GM12878 (cell line): ENCODE measurements at regions of chrX and their contacts with region 1.

Region 1: GRCh38 chrX:155279873-155280272 is 15.6 kb upstream of the RAB39B start:
- DNase-seq: no peak
- ATAC-seq: no peak
- H3K4me3 ChIP-seq: no peak overlapping the region
- H3K27ac ChIP-seq: no peak overlapping the region
- H3K4me1 ChIP-seq: no peaks in the 10 kb centered on the region
- H3K27me3 ChIP-seq: no peaks in the 10 kb centered on the region
- CTCF ChIP-seq: no peak
- EP300 ChIP-seq: no peak
- POLR2A ChIP-seq: no peak
- RAD21 ChIP-seq: no peak

Region 2: GRCh38 chrX:155330992-155331391 is 51.1 kb after region 1 on chrX:
- CTCF ChIA-PET with region 1: no interaction called
- POLR2A ChIA-PET with region 1: no interaction called
- RAD21 ChIA-PET with region 1: no interaction called
- SMC1A ChIA-PET with region 1: no interaction called
- in situ Hi-C with region 1: no loop called
- intact Hi-C with region 1: no loop called
- DNase-seq: no peak
- ATAC-seq: no peak
- H3K4me3 ChIP-seq: no peak overlapping the region
- H3K27ac ChIP-seq: no peak overlapping the region
- H3K4me1 ChIP-seq: no peaks in the 10 kb centered on the region
- H3K27me3 ChIP-seq: no peaks in the 10 kb centered on the region
- CTCF ChIP-seq: no peak
- EP300 ChIP-seq: no peak
- POLR2A ChIP-seq: no peak
- RAD21 ChIP-seq: no peak

Region 3: GRCh38 chrX:155534797-155535196 is 254.9 kb after region 1 on chrX:
- CTCF ChIA-PET with region 1: no interaction called
- POLR2A ChIA-PET with region 1: no interaction called
- RAD21 ChIA-PET with region 1: no interaction called
- SMC1A ChIA-PET with region 1: no interaction called
- in situ Hi-C with region 1: loop called (anchors 25 kb)
- intact Hi-C with region 1: no loop called
- DNase-seq: no peak
- ATAC-seq: no peak
- H3K4me3 ChIP-seq: no peak overlapping the region
- H3K27ac ChIP-seq: no peak overlapping the region
- H3K4me1 ChIP-seq: no peaks in the 10 kb centered on the region
- H3K27me3 ChIP-seq: no peaks in the 10 kb centered on the region
- CTCF ChIP-seq: peak in 1 of 3 experiments; percentile 18; a peak in 2 of 6 replicates
- EP300 ChIP-seq: no peak
- POLR2A ChIP-seq: no peak
- RAD21 ChIP-seq: peak; percentile 26; the same call in 1 of the 2 replicates